Testis (tissue), 5 donors: ENCODE measurements at regions of chr4 and their contacts with region 1.

Region 1: DNA sequence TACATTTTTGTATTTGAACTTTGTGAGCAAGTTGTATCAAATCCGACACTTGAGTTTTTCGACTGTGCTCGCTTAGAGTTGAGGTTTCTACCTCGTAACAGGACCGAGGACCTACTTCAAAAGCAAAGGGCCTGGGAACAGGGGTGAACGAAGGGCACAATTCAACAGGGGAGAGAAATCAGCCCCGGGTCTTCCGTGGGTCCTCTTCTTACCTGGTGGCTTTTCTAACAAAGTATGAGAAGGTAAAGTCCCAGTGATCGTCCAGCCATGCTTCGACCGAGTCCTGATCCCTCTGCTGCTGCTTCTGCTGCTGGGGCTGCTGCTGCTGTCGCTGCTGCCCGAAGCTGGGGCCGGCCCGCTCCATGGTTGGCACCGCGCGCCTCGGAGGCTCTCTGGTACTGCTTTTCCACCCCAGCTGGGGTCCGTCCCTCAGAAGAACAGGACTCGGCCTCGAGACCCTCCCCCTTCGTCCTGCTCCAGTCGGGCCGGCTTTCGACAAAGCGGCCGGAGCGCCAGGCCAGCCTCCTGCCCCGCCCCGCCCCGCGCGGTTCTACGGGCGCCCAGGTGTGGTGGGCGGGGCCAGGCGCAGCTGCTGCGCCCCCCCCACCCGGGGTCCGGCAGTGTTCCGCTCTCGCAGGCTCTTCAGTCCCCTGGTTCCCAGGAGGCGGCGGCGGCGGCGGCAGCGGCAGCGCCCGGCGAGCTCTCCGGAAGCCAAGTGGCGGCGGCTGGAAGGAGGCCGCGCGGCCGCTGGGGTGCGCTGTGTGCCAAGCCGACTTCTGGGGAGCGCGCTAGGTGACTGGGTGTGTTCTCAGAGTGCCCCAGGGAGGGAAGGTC is at the start of gene PDE5A:
- DNase-seq: peak; percentile 87
- H3K4me3 ChIP-seq: peak within 1 kb of the TSS; percentile 84 to 85
- H3K27ac ChIP-seq: peak within 1 kb of the TSS; percentile 91 to 94
- H3K4me1 ChIP-seq: no peaks in the 10 kb centered on the region
- H3K27me3 ChIP-seq: no peaks in the 10 kb centered on the region
- CTCF ChIP-seq: peak; percentile 62 to 85 (median 71)
- POLR2A ChIP-seq: no peak
- total RNA-seq, gene PDE5A: 21.4 to 25.3 TPM

Region 2: GRCh38 chr4:119564106-119564505 is 64.4 kb before region 1 on chr4:
- intact Hi-C with region 1: loop called (anchors 10 kb)
- DNase-seq: no peak
- H3K4me3 ChIP-seq: no peak overlapping the region
- H3K27ac ChIP-seq: no peak overlapping the region
- H3K4me1 ChIP-seq: no peaks in the 10 kb centered on the region
- H3K27me3 ChIP-seq: no peaks in the 10 kb centered on the region
- CTCF ChIP-seq: no peak
- POLR2A ChIP-seq: no peak

Region 3: GRCh38 chr4:120049732-120050494 is 421.4 kb after region 1 on chr4:
- intact Hi-C with region 1: loop called (anchors 5 kb)
- DNase-seq: peak; percentile 94
- H3K4me3 ChIP-seq: peak overlapping the region; percentile 5 to 18
- H3K27ac ChIP-seq: peak overlapping the region in 1 of 2 donors; percentile 11
- H3K4me1 ChIP-seq: no peaks in the 10 kb centered on the region
- H3K27me3 ChIP-seq: no peaks in the 10 kb centered on the region
- CTCF ChIP-seq: peak; percentile 83 to 84 (median 84)
- POLR2A ChIP-seq: no peak